ENCODE measurements at regions of chr5 and their contacts with region 1.

Region 1: DNA sequence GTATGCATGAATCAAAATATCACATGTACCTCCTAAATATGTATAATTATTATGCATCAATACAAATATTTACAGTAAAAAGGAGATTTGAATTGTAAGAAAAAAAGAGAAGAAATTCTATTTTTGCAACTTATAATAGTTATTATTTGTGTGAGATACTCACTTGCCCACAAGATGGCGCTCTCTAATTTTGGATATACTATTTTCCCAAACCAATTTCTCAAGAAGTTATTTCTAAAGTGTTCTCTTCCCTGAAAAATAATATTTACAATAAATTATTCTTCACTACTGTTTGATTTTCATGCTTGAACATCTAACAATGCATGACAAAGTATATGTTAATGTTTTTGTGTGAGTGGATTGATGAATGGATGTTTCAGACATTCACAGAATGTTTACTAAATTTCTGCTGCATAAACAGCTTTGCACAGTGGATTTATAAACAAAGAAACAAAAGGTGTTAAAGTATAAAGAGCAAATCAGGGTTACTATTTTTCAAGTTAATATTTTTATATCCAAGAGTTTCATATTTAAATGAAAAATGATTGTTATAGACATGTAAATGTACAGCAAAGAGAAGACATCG is 503.4 kb downstream of the PDE4D start:
- DNase-seq: peak; percentile 20
- H3K4me3 Mint-ChIP-seq: no peak overlapping the region
- H3K27ac Mint-ChIP-seq: no peak overlapping the region
- H3K4me1 Mint-ChIP-seq: no peaks in the 10 kb centered on the region
- H3K27me3 Mint-ChIP-seq: no peaks in the 10 kb centered on the region
- CTCF ChIP-seq: peak; percentile 37

Region 2: DNA sequence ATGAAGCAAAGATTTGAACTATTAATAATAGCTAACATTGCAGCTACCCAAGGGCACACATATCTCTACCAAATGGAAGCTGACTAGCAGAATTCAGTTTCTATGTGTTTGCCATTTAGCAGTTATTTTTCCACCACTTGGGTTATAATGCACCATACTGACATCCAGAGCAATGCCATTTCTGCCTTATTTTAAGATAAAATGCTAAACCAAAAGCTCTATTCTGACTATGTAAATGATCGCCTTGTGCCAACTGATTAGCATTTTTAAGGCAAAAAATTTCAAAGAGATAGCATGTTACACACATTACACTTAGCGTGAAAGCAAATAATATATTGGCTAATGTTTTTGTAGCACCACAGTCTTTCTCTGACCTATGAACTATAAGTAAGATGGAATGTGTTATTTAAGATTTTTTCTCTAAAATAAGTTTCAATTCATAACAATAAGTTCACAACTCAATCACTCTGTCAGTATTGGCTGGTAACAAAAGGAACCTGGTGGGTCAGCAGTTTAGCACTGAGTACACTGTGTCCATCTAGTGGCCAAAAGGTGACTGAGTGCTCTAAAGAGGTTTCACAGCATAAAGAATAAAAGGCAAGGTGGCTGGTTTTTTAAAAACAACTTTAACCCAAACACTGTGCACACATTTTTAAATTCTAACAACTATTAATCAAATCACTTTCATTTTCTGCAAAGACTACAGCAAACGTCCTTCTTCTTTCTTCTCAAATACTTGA is 59.9 kb after region 1 on chr5:
- CTCF ChIA-PET with region 1: no interaction called
- intact Hi-C with region 1: loop called (anchors 5 kb)
- DNase-seq: peak; percentile 3
- H3K4me3 Mint-ChIP-seq: no peak overlapping the region
- H3K27ac Mint-ChIP-seq: no peak overlapping the region
- H3K4me1 Mint-ChIP-seq: no peaks in the 10 kb centered on the region
- H3K27me3 Mint-ChIP-seq: no peaks in the 10 kb centered on the region
- CTCF ChIP-seq: peak; percentile 33

Region 3: GRCh38 chr5:59496524-59497134 is 106.5 kb after region 1 on chr5:
- CTCF ChIA-PET with region 1: no interaction called
- intact Hi-C with region 1: loop called (anchors 2 kb)
- DNase-seq: peak; percentile 27
- H3K4me3 Mint-ChIP-seq: no peak overlapping the region
- H3K27ac Mint-ChIP-seq: no peak overlapping the region
- H3K4me1 Mint-ChIP-seq: no peaks in the 10 kb centered on the region
- H3K27me3 Mint-ChIP-seq: no peaks in the 10 kb centered on the region
- CTCF ChIP-seq: peak; percentile 56

Region 4: DNA sequence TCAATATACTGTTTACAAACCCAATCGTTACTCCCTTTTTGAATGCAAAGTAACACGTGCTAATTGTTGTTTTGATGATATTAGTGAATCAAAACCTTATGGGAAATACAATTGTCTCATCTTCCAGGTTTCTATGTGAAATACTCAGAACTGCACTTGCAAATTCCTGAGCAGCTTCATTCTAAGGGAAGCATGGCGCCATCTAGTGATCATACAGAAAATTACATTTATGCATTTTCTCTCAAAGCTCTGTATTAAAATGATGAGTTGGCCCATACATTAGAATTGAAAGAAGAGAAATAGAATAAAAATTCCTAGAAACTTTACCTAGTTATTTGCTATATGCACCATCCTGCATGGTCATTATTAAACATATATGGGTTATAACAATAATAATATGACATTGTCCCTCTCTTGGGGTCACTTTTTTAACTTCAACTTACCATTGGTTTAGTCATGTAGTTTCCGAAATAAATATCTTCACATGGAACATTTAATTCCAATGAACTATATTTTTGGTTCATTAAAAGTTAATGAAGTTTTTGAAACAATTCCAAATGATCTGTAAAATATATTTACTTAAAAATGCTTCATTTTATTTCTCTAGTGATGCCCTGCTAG is 283.4 kb after region 1 on chr5:
- CTCF ChIA-PET with region 1: no interaction called
- intact Hi-C with region 1: loop called (anchors 1 kb)
- DNase-seq: peak; percentile 9
- H3K4me3 Mint-ChIP-seq: no peak overlapping the region
- H3K27ac Mint-ChIP-seq: no peak overlapping the region
- H3K4me1 Mint-ChIP-seq: no peaks in the 10 kb centered on the region
- H3K27me3 Mint-ChIP-seq: no peaks in the 10 kb centered on the region
- CTCF ChIP-seq: peak; percentile 63

Region 5: DNA sequence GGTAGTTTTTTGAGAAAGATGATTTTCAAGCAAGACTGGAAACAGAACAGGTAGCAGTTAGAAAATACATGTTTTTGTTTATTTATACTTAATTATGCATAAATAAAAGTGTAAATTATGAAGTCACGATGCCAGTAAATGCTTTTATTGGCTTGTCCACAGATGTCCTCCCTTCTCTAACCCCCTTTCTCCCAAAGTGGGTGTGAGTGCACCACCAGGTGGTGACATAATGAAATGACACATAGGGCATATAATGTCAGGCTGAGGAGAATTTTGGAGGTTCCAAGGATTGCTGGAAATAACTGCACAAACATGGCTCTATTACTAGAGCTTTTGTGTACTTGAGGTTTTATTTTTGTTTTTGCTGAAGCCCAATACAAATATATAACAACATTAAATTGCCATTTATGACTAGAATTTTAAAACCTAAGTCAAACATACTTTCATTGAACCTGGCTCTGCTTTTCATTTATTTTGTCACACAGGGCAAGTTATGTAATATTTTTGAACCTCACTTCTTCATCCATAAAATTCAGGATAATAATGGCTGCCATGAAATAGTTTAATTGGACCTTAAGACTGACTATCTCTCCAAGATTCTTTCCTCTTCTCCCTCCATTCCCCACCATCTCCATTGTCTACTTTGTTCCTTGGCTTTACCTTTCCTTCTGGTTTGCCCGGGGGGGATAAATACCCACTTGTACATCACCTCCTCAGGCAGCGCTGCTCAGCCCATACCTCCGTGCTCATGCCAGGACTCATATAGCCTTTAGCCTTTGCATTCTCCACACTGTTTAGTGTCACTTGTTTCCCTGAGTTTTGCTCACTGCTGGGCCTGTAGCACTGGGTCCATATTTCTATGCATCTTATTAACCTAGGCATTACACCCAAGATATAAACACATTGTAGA is 334.6 kb after region 1 on chr5:
- CTCF ChIA-PET with region 1: no interaction called
- intact Hi-C with region 1: loop called (anchors 2 kb)
- DNase-seq: peak; percentile 68
- H3K4me3 Mint-ChIP-seq: no peak overlapping the region
- H3K27ac Mint-ChIP-seq: no peak overlapping the region
- H3K4me1 Mint-ChIP-seq: peaks cover 8% of the 10 kb centered on the region
- H3K27me3 Mint-ChIP-seq: no peaks in the 10 kb centered on the region
- CTCF ChIP-seq: peak; percentile 76